ENCODE measurements at regions of chr11 and their contacts with region 1.

Region 1: GRCh38 chr11:125345421-125346178 is 150.5 kb downstream of the FEZ1 start:
- DNase-seq: peak; percentile 51 to 91 (median 78)
- H3K4me3 ChIP-seq: no peak overlapping the region
- H3K27ac ChIP-seq: peak overlapping the region in 2 of 5 donors; percentile 34 to 35
- H3K4me1 ChIP-seq: peaks cover 0 to 5% of the 10 kb centered on the region in 2 donors
- H3K27me3 ChIP-seq: no peaks in the 10 kb centered on the region
- CTCF ChIP-seq: peak; percentile 71 to 86 (median 80)
- POLR2A ChIP-seq: no peak

Region 2: GRCh38 chr11:124953753-124954589 is 391.6 kb before region 1 on chr11 and contains the start of gene CCDC15:
- intact Hi-C with region 1: loop called in 1 of 2 experiments (anchors 10 kb)
- DNase-seq: peak; percentile 96 to 99 (median 98)
- H3K4me3 ChIP-seq: peak within 1 kb of the TSS; percentile 26 to 65 (median 56)
- H3K27ac ChIP-seq: peak within 1 kb of the TSS in 4 of 5 donors; percentile 34 to 84 (median 75)
- H3K4me1 ChIP-seq: peaks cover 5 to 13% of the 10 kb centered on the region in 2 donors
- H3K27me3 ChIP-seq: no peaks in the 10 kb centered on the region
- CTCF ChIP-seq: no peak
- POLR2A ChIP-seq: peak; percentile 70 to 78
- total RNA-seq, gene CCDC15: 0.78 to 4.9 (median 2.0) TPM

Region 3: GRCh38 chr11:124961972-124962609 is 383.5 kb before region 1 on chr11:
- intact Hi-C with region 1: loop called (anchors 10 kb)
- DNase-seq: peak in 2 of 7 donors; percentile 6 to 18
- H3K4me3 ChIP-seq: no peak overlapping the region
- H3K27ac ChIP-seq: no peak overlapping the region
- H3K4me1 ChIP-seq: no peaks in the 10 kb centered on the region
- H3K27me3 ChIP-seq: no peaks in the 10 kb centered on the region
- CTCF ChIP-seq: peak; percentile 35 to 93 (median 84)
- POLR2A ChIP-seq: no peak

Region 4: GRCh38 chr11:125091247-125091876 is 254.2 kb before region 1 on chr11:
- intact Hi-C with region 1: loop called in 1 of 2 experiments (anchors 5 kb)
- DNase-seq: peak in 4 of 7 donors; percentile 38 to 69 (median 56)
- H3K4me3 ChIP-seq: peak overlapping the region in 1 of 4 donors; percentile 2
- H3K27ac ChIP-seq: peak overlapping the region in 4 of 5 donors; percentile 30 to 66 (median 58)
- H3K4me1 ChIP-seq: peaks cover 6 to 8% of the 10 kb centered on the region in 2 donors
- H3K27me3 ChIP-seq: no peaks in the 10 kb centered on the region
- CTCF ChIP-seq: peak; percentile 27 to 79 (median 66)
- POLR2A ChIP-seq: no peak

Region 5: DNA sequence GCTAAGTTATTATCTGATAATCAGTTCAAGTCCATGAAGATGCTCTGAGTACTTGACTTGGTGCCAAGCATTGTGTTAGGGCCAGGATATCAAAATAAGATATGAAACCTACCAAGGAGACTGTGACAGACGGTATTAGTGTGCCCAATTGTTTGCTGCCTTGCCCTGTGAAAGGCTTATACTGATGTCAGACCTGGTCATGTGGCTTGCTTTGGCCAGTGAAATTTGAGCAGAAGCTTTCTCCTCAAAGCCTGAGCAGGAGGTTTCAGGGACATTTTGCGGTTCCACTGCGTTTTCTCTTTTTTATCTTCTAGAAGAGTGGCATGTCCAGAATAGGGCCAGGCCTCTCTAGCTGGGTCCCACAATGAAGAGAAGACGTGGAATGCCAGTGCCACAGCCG is 196.9 kb before region 1 on chr11:
- intact Hi-C with region 1: no loop called
- DNase-seq: no peak
- H3K4me3 ChIP-seq: no peak overlapping the region
- H3K27ac ChIP-seq: no peak overlapping the region
- H3K4me1 ChIP-seq: no peaks in the 10 kb centered on the region
- H3K27me3 ChIP-seq: no peaks in the 10 kb centered on the region
- CTCF ChIP-seq: no peak
- POLR2A ChIP-seq: no peak

Region 6: GRCh38 chr11:125164422-125165110 is 181.0 kb before region 1 on chr11 and contains the start of gene PKNOX2:
- intact Hi-C with region 1: loop called (anchors 5 kb)
- DNase-seq: peak; percentile 65 to 78 (median 73)
- H3K4me3 ChIP-seq: peak within 1 kb of the TSS in 2 of 4 donors; percentile 44 to 73
- H3K27ac ChIP-seq: peak within 1 kb of the TSS in 3 of 5 donors; percentile 10 to 82 (median 72)
- H3K4me1 ChIP-seq: peaks cover 0 to 16% of the 10 kb centered on the region in 2 donors
- H3K27me3 ChIP-seq: no peaks in the 10 kb centered on the region
- CTCF ChIP-seq: peak; percentile 16 to 49 (median 39)
- POLR2A ChIP-seq: peak in 1 of 2 donors; percentile 21
- total RNA-seq, gene PKNOX2: 1.2 to 34.7 (median 10.7) TPM

Region 7: DNA sequence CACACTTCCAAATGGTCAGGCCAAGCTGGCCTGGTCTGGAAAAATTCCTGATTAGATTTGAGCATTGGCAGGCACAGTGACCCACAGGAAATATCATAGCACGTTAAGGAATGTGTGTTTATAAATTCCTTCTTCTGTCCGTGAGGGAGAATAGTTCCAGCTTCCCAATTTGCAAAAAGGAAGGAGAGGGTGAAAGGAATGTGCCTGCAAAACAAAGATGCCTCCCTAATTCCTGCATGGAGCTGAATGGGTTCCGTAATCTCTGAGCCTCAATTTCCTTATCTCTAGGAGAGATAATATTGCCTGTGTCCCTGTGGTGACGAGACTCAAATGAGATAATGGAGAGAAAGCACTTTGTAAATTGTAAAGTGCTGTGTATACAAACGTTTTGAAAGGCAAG is 45.3 kb after region 1 on chr11:
- intact Hi-C with region 1: no loop called
- DNase-seq: no peak
- H3K4me3 ChIP-seq: no peak overlapping the region
- H3K27ac ChIP-seq: peak overlapping the region in 1 of 5 donors; percentile 40
- H3K4me1 ChIP-seq: no peaks in the 10 kb centered on the region
- H3K27me3 ChIP-seq: no peaks in the 10 kb centered on the region
- CTCF ChIP-seq: no peak
- POLR2A ChIP-seq: no peak

Region 8: GRCh38 chr11:125481531-125481930 is 135.9 kb after region 1 on chr11:
- intact Hi-C with region 1: no loop called
- DNase-seq: no peak
- H3K4me3 ChIP-seq: no peak overlapping the region
- H3K27ac ChIP-seq: no peak overlapping the region
- H3K4me1 ChIP-seq: no peaks in the 10 kb centered on the region
- H3K27me3 ChIP-seq: no peaks in the 10 kb centered on the region
- CTCF ChIP-seq: no peak
- POLR2A ChIP-seq: no peak

Region 9: DNA sequence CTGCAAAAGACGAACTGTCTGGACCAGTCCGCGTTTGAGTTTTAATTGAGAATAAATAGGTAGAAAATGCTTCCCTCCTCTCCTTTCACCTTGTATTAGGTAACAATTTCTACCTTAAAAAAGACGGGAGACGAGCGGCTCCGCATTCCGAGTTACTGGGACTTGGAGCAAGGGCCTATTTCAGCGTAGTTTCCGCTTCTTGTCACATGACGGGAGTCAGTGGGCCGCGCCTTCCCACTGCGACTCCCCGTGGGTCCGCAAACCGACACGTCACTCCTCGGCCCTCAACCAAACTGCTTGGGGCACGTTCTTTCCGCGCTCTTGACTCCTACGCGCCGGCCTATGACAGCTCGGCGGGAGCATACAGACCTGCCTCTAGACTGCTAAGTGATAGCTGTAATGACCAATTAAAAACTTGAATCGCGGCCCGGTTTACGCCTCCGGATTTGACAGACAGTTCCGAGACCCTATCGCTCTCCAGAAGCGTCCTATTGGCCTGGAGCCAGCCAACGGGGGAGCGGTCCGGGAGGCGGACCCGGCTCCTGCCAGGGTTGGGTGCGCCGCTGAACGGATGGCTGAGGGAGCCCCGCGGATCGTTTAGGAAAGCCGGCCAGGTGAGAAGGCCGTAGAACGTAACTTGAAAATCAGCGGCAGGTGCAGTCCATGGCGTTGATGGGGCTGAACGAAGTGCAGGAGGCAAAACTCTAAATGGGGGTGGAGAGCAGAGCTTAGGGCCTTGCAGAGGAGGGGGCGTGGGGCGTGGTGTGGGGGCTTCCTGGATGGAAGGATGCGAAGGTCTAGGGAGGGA is 246.9 kb after region 1 on chr11 and contains the start of gene STT3A:
- intact Hi-C with region 1: no loop called
- DNase-seq: peak; percentile 99 to 100 (median 100)
- H3K4me3 ChIP-seq: peak within 1 kb of the TSS; percentile 57 to 98 (median 77)
- H3K27ac ChIP-seq: peak within 1 kb of the TSS; percentile 95 to 99 (median 95)
- H3K4me1 ChIP-seq: peaks cover 8 to 32% of the 10 kb centered on the region in 2 donors
- H3K27me3 ChIP-seq: no peaks in the 10 kb centered on the region
- CTCF ChIP-seq: no peak
- POLR2A ChIP-seq: peak; percentile 75 to 95
- total RNA-seq, gene STT3A: 79.2 to 175 (median 116) TPM